Left colon (tissue), 2 donors: ENCODE measurements at regions of chr1 and their contacts with region 1.

Region 1: DNA sequence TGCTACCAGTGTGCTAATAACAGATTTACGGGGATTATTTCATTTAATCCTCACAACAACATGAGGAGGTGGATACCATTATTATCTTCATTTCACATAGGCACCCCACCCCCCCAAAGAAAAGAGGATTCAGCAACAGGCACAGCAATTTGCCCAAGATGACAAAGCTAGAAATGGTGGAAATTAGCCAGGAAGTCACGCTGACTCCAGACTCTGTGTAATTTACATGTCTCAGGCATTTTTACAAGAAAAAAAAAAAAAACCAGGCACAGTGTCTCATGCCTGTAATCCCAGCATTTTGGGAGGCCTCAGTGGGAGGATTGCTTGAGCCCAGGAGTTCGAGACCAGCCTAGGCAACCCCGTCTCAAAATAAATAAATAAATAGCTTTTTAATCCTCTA is 37.5 kb upstream of the PRDM2 start:
- DNase-seq: no peak
- ATAC-seq: no peak

Region 2: GRCh38 chr1:13523780-13524477 is 138.6 kb before region 1 on chr1:
- intact Hi-C with region 1: no loop called
- DNase-seq: no peak
- ATAC-seq: no peak

Region 3: DNA sequence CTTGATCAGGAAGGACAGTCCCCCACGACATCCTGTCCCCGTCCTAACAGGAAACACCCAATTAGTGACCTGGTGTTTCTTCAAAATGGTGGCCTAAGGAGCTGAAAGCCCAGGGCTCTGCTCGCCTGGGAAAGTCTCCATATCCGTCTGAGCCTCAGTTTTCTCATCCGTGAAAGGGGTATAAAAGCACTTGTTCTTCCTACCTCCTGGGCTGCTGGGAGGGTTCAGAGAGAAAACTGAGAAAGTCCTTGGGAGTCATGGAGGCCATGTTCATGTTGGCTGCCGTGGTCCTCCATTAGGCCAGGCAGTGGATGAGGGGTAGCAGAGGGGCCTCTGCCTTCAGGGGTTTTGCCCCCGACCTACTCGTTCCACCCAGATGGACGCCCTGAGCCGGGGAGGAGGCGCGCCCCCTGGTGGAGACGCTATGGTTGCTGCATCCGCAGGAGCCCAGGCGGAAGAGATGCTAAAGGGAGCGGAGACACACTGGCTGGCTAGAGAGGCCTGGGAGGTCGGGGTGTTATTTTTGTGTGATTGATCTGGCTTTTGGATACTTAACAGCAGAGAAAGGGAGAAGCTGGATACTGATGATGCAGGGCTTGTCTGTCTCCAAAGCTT is 151.0 kb after region 1 on chr1:
- intact Hi-C with region 1: loop called in 1 of 2 experiments (anchors 10 kb)
- DNase-seq: no peak
- ATAC-seq: no peak

Region 4: DNA sequence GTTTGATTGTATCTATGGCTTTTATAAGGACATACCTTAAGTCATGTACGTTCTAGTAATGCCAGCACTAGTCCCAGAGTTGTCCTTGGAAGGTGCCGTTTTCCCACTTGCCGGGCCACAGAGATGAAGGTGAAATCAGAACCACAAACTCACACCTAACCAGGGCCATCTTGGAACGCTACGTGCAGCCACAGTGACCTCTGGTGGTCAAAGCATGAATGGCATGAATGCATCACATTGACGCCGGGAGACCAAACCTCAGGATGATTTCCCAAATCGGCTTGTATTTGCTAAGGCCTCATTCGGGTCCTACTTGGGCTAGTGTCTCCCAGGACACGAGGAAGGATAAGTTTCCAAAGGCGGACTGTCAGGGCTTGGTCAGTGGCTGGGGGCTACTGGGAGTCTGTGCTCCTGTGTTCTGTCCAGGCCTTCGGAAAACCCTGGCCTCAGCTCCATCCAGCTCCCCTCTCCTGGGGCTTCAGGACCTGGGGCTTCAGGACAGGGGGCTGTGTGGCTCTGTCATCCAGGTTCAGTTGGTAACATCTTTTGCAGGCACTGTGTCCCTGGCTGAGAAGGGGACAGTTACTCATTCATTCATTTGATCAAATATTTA is 298.0 kb after region 1 on chr1:
- intact Hi-C with region 1: loop called (anchors 5 to 10 kb)
- DNase-seq: peak; percentile 38 to 80
- ATAC-seq: peak; percentile 85